GM10248 (cell line): ENCODE measurements at regions of chr15 and their contacts with region 1.

Region 1: GRCh38 chr15:40108855-40109735 is at the start of gene BMF:
- DNase-seq: peak; percentile 95
- CTCF ChIP-seq: no peak

Region 2: GRCh38 chr15:40044717-40045571 is 64.2 kb before region 1 on chr15:
- CTCF ChIA-PET with region 1: interaction called, 511 read pairs
- POLR2A ChIA-PET with region 1: interaction called, 20 read pairs
- DNase-seq: peak; percentile 88
- CTCF ChIP-seq: peak; percentile 99

Region 3: GRCh38 chr15:40054605-40055545 is 54.2 kb before region 1 on chr15:
- CTCF ChIA-PET with region 1: interaction called, 511 read pairs
- POLR2A ChIA-PET with region 1: no interaction called
- DNase-seq: peak; percentile 79
- CTCF ChIP-seq: no peak

Region 4: DNA sequence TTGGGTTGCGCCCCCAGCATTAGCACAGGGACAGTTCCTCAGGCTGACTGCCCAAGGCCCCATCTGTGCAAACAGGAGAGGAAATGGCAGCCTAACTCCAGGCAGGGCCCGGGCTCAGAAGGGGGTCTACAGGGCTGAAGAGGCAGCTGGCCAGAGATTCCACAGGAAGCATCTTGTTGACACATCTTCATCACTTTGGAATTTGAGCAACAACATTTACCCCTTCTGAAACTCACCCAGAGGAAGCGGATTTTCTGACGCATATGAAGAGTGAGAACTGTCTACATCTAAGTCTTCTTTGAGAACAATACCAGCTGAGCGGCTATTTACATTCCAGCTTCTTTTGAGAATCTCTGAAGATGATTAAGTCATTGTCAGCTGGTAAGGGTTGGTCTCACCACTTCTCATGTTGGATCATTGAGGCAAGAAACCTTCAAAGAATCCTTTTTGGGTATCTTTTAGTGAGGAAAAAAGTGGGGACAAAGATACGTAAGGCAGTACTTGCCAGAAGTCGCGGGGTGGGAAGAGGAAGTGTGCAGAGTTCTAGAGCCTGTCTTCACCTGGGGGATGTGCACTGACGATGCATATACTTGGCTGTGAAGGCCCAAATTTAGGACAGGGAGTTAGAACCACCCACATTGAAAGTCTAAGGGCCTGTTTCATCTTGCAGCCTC is 44.7 kb before region 1 on chr15:
- CTCF ChIA-PET with region 1: interaction called, 85 read pairs
- POLR2A ChIA-PET with region 1: interaction called, 5 read pairs
- DNase-seq: peak; percentile 67
- CTCF ChIP-seq: no peak

Region 5: DNA sequence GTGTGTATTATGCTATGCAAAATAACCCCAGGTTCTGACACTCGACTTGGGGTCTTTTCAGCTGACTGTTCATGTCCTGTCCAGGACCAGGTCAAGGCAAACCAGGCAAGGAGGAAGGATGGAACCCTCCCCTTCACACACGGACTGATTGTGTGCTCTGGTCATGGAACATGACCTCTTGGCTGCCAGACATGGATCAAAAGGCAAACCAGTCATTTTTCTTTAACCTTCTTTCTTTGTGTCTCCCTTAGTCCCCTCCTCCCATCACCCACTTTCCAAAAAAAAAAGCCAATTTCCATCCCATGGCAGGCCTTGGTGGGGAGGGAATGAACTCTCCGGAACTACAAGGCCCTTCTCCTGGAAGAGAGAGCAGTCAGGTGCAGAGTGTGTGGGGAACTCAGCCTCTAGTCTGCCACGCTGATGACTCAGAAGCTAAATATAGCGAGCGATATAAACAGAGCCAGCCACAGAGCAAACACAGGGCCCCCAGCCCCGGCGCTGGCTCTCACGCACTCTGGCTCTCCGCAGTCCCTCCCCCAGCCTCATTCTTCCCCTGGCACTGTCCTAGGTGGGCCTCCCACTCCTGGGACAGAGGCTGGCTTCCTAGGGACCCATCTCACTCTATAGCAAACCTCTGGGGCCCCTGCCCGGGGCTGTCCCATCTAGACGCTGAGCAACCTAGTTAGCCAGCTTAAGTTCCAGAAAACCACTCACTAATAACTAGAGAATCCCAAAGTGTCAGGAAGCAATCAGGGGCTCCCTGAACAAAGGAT is 10.4 kb before region 1 on chr15:
- CTCF ChIA-PET with region 1: interaction called, 494 read pairs
- POLR2A ChIA-PET with region 1: interaction called, 25 read pairs
- DNase-seq: peak; percentile 88
- CTCF ChIP-seq: no peak

Region 6: DNA sequence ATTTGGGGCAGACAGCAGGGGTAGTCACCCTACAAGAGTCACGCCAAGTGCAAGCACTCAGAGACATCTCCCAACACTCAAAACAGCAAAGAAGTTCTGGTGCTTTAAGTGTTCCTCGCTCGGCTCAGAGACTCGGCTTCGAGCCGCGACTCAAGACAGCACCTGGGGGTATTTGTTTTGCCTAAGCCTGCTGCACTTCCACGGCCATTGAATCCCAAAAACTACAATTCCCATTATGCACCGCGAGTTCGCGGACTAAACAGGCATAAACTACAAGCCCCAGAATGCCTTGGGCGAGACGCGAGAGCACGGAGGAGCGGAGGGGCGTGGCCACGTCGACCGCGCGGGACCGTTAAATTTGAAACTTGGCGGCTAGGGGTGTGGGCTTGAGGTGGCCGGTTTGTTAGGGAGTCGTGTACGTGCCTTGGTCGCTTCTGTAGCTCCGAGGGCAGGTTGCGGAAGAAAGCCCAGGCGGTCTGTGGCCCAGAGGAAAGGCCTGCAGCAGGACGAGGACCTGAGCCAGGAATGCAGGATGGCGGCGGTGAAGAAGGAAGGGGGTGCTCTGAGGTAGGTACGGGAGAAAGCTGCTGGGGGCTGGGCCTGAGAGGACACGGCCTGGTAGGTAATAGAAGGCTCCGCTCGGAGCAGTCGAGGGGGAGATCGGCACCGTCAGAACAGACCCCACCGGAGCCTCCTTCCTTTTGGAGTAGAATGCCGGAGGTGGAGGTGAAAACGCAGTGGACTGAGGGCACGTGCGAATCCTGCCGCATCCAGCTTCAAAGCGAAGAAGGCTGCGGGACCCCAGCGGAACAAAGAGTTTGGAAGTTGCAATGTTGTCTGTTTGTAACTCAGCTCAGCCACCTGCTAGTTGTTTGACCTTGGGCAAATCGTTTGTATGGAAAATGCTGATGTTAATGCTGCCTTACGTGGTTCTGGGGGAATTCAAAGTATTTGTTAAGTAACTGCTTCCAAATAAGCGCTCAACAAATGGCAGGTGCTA is 51.9 kb after region 1 on chr15 and contains the start of gene BUB1B:
- CTCF ChIA-PET with region 1: interaction called, 62 read pairs
- POLR2A ChIA-PET with region 1: interaction called, 5 read pairs
- DNase-seq: peak; percentile 95
- CTCF ChIP-seq: no peak

Region 7: DNA sequence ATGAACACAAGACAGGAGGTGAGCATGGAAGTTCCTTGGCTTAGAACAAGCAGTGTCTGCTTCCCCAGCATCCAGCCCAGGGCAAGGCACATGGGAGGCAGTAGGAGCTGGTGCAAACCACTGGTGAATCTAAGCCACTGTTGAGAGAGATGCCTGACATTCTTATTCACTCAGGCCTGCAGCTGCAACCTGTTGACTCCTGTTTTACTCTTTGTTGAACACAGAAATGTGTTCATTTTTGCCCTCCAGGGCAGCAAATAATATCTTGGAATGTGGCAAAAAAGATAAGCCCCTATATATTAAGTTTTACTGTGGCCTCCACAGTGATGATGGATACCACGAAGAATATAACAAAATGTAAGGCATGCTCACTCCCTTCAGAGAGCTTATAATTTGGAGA is 120.9 kb after region 1 on chr15:
- CTCF ChIA-PET with region 1: no interaction called
- POLR2A ChIA-PET with region 1: no interaction called
- DNase-seq: no peak
- CTCF ChIP-seq: no peak